Psoas muscle (tissue), 8 donors: ENCODE measurements at regions of chr3 and their contacts with region 1.

Region 1: DNA sequence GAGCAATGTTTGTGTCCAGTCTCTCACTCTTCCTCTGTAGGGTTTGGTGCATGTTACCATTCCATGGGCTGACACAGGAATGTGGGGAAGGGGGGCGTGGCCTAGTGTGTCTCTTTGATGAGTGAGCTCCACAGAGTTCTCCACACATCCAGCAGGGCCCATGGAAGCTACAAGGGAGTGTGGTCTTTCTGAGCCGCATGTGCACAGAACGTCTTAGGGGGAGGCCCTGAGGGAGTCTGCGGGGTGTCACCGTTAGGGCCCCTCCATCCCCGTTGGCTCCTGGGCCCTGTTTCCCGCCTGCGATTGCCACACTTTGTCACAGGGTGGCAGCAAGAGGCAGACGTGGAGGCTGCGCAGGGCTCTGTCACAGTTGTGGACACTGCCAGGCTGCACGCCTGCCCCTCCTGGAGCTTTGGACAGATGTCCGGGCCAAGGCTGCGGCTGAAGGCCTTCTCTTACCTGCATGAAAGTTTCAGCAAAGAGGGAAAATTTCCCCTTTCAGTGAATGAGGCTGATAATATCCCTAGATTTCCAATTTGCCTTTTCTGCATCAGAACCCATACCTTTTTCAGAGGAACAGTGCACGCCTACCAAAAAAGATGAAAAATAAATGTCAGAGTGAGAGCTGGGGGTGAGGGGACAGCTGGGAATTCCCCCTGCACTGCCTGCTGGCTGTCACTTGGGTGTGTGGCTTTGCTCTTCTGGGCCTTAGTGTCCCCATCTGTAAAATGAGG is 24.3 kb downstream of the CACNA2D3 start:
- DNase-seq: peak; percentile 61 to 85
- ATAC-seq: peak; percentile 95 to 99 (median 98)
- H3K4me3 ChIP-seq: no peak overlapping the region
- H3K27ac ChIP-seq: no peak overlapping the region
- H3K4me1 ChIP-seq: peaks cover 7% of the 10 kb centered on the region
- H3K27me3 ChIP-seq: no peaks in the 10 kb centered on the region
- CTCF ChIP-seq: peak; percentile 79

Region 2: DNA sequence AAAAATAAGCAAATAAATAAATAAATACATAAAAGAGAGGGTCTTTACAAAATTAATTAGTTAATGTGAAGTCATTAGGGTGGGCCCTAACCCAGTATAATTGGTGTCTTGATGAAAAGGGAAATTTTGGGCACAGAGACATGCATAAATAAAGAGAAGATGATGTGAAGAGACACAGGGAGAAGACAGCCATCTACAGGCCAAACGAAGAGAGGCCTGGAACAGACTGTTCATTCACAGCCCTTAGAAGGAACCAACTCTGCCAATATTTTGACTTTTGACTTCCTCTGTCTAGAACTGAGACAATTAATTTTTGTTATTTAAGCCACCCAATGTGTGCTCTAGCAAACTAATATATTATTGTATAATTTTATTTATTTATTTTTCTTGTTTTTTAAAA is 225.4 kb before region 1 on chr3:
- intact Hi-C with region 1: no loop called
- DNase-seq: no peak
- ATAC-seq: no peak
- H3K4me3 ChIP-seq: no peak overlapping the region
- H3K27ac ChIP-seq: no peak overlapping the region
- H3K4me1 ChIP-seq: no peaks in the 10 kb centered on the region
- H3K27me3 ChIP-seq: no peaks in the 10 kb centered on the region
- CTCF ChIP-seq: no peak

Region 3: GRCh38 chr3:53938645-53939044 is 208.0 kb before region 1 on chr3:
- intact Hi-C with region 1: loop called in 1 of 2 experiments (anchors 5 kb)
- DNase-seq: no peak
- ATAC-seq: peak in 3 of 4 donors; percentile 59 to 76 (median 73)
- H3K4me3 ChIP-seq: no peak overlapping the region
- H3K27ac ChIP-seq: no peak overlapping the region
- H3K4me1 ChIP-seq: no peaks in the 10 kb centered on the region
- H3K27me3 ChIP-seq: no peaks in the 10 kb centered on the region
- CTCF ChIP-seq: peak; percentile 84

Region 4: DNA sequence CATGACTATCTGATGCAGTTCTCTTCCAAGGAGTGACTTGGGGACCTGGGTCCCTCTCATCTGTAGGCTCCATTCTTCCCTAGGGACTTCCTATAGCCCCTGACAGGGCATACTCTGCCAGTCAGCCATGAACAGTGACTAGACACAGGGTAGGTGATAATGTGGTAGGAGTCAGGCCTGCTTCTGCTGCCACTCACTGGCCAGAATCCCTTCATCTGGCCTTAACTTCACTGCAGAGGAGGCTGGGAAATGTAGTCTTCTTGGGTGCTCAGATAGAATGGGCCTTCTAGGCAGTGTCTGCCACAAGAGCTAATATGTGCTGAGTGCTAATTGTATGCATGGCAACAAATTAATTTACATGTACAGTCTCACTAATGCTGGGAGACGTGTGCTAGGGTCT is 60.2 kb after region 1 on chr3:
- intact Hi-C with region 1: no loop called
- DNase-seq: no peak
- ATAC-seq: peak in 2 of 4 donors; percentile 59 to 66
- H3K4me3 ChIP-seq: no peak overlapping the region
- H3K27ac ChIP-seq: no peak overlapping the region
- H3K4me1 ChIP-seq: peaks cover 7% of the 10 kb centered on the region
- H3K27me3 ChIP-seq: no peaks in the 10 kb centered on the region
- CTCF ChIP-seq: no peak

Region 5: GRCh38 chr3:54356261-54357045 is 209.8 kb after region 1 on chr3:
- intact Hi-C with region 1: loop called (anchors 5 kb)
- DNase-seq: peak; percentile 18 to 56
- ATAC-seq: peak; percentile 77 to 83 (median 80)
- H3K4me3 ChIP-seq: no peak overlapping the region
- H3K27ac ChIP-seq: peak overlapping the region; percentile 46
- H3K4me1 ChIP-seq: peaks cover 44% of the 10 kb centered on the region
- H3K27me3 ChIP-seq: no peaks in the 10 kb centered on the region
- CTCF ChIP-seq: no peak

Region 6: DNA sequence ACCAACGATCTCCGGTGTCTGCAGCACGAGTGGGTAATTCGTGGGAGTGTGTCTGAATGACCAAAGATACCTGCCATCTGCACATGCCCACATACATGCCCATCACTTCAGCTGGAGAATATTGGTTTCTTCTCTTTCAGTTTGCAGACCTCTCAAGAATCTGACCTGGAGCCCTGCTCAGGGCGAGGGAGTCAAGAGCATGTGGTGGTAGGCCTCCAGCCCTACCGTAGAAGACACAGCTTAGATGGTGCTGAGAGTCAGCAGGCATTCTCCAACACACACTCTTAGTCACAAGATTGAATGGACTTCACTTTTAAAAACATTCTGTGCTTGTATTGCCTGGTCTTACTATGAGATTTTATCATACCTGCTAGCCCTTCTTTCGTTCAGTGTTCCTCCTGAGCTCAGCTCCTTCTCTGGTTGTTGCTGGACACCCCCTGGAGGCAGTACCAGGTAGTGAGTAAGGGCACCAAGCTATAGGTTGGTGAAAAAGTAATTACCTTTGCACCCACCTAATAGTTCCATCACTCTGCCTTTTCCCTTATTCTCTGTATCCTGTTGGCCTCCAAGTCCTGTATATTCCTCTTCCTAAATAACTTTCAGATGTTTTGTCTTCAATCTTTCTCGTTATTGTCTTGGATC is 227.7 kb after region 1 on chr3:
- intact Hi-C with region 1: loop called in 1 of 2 experiments (anchors 1 kb)
- DNase-seq: no peak
- ATAC-seq: peak; percentile 63 to 80 (median 73)
- H3K4me3 ChIP-seq: no peak overlapping the region
- H3K27ac ChIP-seq: no peak overlapping the region
- H3K4me1 ChIP-seq: no peaks in the 10 kb centered on the region
- H3K27me3 ChIP-seq: no peaks in the 10 kb centered on the region
- CTCF ChIP-seq: peak; percentile 57